CD4-positive, alpha-beta T cell (primary cell): ENCODE measurements at regions of chr2 and their contacts with region 1.

Region 1: GRCh38 chr2:241130316-241130715 is 19.0 kb downstream of the PASK start:
- DNase-seq: no peak
- ATAC-seq: no peak
- H3K4me3 ChIP-seq: no peak overlapping the region
- H3K4me3 Mint-ChIP-seq: no peak overlapping the region
- H3K27ac ChIP-seq: no peak overlapping the region
- H3K27ac Mint-ChIP-seq: no peak overlapping the region
- H3K4me1 ChIP-seq: peaks cover 39% of the 10 kb centered on the region
- H3K4me1 Mint-ChIP-seq: peaks cover 12% of the 10 kb centered on the region
- H3K27me3 ChIP-seq: no peaks in the 10 kb centered on the region
- H3K27me3 Mint-ChIP-seq: no peaks in the 10 kb centered on the region
- CTCF ChIP-seq: no peak

Region 2: DNA sequence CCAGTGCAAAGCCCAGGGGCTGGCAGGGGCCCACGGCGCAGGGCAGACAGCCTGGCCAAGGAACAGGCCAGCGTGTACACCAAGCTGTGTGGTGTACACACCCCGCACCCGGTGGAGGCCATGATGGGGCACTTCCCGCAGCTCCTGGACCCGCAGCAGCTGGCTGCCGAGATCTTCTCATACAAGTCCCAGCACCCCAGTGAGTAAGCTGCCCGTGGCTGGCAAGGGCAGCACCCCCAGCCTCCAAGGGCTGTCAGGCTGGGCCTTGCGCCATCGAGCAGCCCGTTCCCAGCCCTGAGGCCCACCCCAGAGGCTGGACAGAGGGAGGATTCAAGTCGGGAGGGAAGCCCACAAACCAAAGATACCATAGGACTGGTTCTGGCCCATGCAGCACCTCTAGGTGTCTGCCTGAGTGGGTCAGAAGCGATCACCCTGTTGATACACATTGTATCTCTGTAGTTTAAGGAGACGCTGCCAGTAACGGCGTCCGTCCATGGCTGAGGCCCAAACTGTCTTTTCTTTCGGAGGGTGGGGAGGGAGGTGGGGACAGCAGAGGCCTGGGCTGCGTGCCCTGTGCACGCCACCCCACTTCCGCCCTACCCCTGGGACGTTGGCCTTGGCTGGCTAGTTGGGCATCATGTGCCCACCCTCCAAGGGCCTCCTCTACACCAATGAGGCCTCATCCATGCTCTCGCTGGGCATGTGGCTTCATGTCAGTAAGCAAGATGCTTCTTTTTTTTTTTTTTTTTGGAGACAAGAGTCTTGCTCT is 11.4 kb before region 1 on chr2:
- CTCF ChIA-PET with region 1: no interaction called
- POLR2A ChIA-PET with region 1: no interaction called
- intact Hi-C with region 1: no loop called
- DNase-seq: no peak
- ATAC-seq: no peak
- H3K4me3 ChIP-seq: no peak overlapping the region
- H3K4me3 Mint-ChIP-seq: no peak overlapping the region
- H3K27ac ChIP-seq: no peak overlapping the region
- H3K27ac Mint-ChIP-seq: no peak overlapping the region
- H3K4me1 ChIP-seq: peaks cover 6% of the 10 kb centered on the region
- H3K4me1 Mint-ChIP-seq: peaks cover 14% of the 10 kb centered on the region
- H3K27me3 ChIP-seq: no peaks in the 10 kb centered on the region
- H3K27me3 Mint-ChIP-seq: no peaks in the 10 kb centered on the region
- CTCF ChIP-seq: no peak

Region 3: GRCh38 chr2:241160318-241160717 is 30.0 kb after region 1 on chr2:
- CTCF ChIA-PET with region 1: no interaction called
- POLR2A ChIA-PET with region 1: no interaction called
- intact Hi-C with region 1: loop called in 1 of 2 experiments (anchors 1 kb)
- DNase-seq: no peak
- ATAC-seq: no peak
- H3K4me3 ChIP-seq: no peak overlapping the region
- H3K4me3 Mint-ChIP-seq: no peak overlapping the region
- H3K27ac ChIP-seq: no peak overlapping the region
- H3K27ac Mint-ChIP-seq: no peak overlapping the region
- H3K4me1 ChIP-seq: peaks cover 7% of the 10 kb centered on the region
- H3K4me1 Mint-ChIP-seq: peaks cover 9% of the 10 kb centered on the region
- H3K27me3 ChIP-seq: no peaks in the 10 kb centered on the region
- H3K27me3 Mint-ChIP-seq: no peaks in the 10 kb centered on the region
- CTCF ChIP-seq: no peak

Region 4: GRCh38 chr2:241188361-241189050 is 58.2 kb after region 1 on chr2 and contains the start of gene ANO7:
- CTCF ChIA-PET with region 1: no interaction called
- POLR2A ChIA-PET with region 1: no interaction called
- intact Hi-C with region 1: no loop called
- DNase-seq: no peak
- ATAC-seq: no peak
- H3K4me3 ChIP-seq: no peak within 1 kb of the TSS
- H3K4me3 Mint-ChIP-seq: no peak within 1 kb of the TSS
- H3K27ac ChIP-seq: no peak within 1 kb of the TSS
- H3K27ac Mint-ChIP-seq: no peak within 1 kb of the TSS
- H3K4me1 ChIP-seq: no peaks in the 10 kb centered on the region
- H3K4me1 Mint-ChIP-seq: no peaks in the 10 kb centered on the region
- H3K27me3 ChIP-seq: no peaks in the 10 kb centered on the region
- H3K27me3 Mint-ChIP-seq: no peaks in the 10 kb centered on the region
- CTCF ChIP-seq: no peak
- total RNA-seq, gene ANO7: 0.14 to 0.25 TPM

Region 5: GRCh38 chr2:241686649-241687425 is 556.5 kb after region 1 on chr2 and contains the start of gene DTYMK:
- CTCF ChIA-PET with region 1: no interaction called
- POLR2A ChIA-PET with region 1: no interaction called
- intact Hi-C with region 1: no loop called
- DNase-seq: peak; percentile 89 to 98 (median 95)
- ATAC-seq: peak; percentile 90
- H3K4me3 ChIP-seq: peak within 1 kb of the TSS; percentile 84
- H3K4me3 Mint-ChIP-seq: peak within 1 kb of the TSS; percentile 95
- H3K27ac ChIP-seq: peak within 1 kb of the TSS; percentile 60 to 85
- H3K27ac Mint-ChIP-seq: peak within 1 kb of the TSS; percentile 84
- H3K4me1 ChIP-seq: peaks cover 37% of the 10 kb centered on the region
- H3K4me1 Mint-ChIP-seq: peaks cover 38% of the 10 kb centered on the region
- H3K27me3 ChIP-seq: no peaks in the 10 kb centered on the region
- H3K27me3 Mint-ChIP-seq: no peaks in the 10 kb centered on the region
- CTCF ChIP-seq: no peak
- total RNA-seq, gene DTYMK: 4.8 to 6.0 TPM